ENCODE measurements at regions of chr2 and their contacts with region 1.

Region 1: GRCh38 chr2:134411828-134412638 is 158.2 kb downstream of the MGAT5 start:
- DNase-seq: peak; percentile 67
- H3K4me3 ChIP-seq: no peak overlapping the region
- H3K27ac ChIP-seq: no peak overlapping the region
- H3K4me1 ChIP-seq: peaks cover 38% of the 10 kb centered on the region
- H3K27me3 ChIP-seq: no peaks in the 10 kb centered on the region
- CTCF ChIP-seq: peak; percentile 77 to 84

Region 2: GRCh38 chr2:133652398-133652797 is 759.6 kb before region 1 on chr2:
- CTCF ChIA-PET with region 1: no interaction called
- dilution Hi-C with region 1: no loop called
- in situ Hi-C with region 1: no loop called
- intact Hi-C with region 1: no loop called
- DNase-seq: no peak
- H3K4me3 ChIP-seq: no peak overlapping the region
- H3K27ac ChIP-seq: no peak overlapping the region
- H3K4me1 ChIP-seq: peaks cover 6% of the 10 kb centered on the region
- H3K27me3 ChIP-seq: no peaks in the 10 kb centered on the region
- CTCF ChIP-seq: no peak

Region 3: GRCh38 chr2:133886735-133887660 is 525.0 kb before region 1 on chr2:
- CTCF ChIA-PET with region 1: interaction called, 7 read pairs
- dilution Hi-C with region 1: no loop called
- in situ Hi-C with region 1: loop called in 1 of 2 experiments (anchors 25 kb)
- intact Hi-C with region 1: loop called (anchors 1 kb)
- DNase-seq: peak; percentile 71
- H3K4me3 ChIP-seq: no peak overlapping the region
- H3K27ac ChIP-seq: no peak overlapping the region
- H3K4me1 ChIP-seq: peaks cover 16% of the 10 kb centered on the region
- H3K27me3 ChIP-seq: no peaks in the 10 kb centered on the region
- CTCF ChIP-seq: peak; percentile 61 to 73

Region 4: DNA sequence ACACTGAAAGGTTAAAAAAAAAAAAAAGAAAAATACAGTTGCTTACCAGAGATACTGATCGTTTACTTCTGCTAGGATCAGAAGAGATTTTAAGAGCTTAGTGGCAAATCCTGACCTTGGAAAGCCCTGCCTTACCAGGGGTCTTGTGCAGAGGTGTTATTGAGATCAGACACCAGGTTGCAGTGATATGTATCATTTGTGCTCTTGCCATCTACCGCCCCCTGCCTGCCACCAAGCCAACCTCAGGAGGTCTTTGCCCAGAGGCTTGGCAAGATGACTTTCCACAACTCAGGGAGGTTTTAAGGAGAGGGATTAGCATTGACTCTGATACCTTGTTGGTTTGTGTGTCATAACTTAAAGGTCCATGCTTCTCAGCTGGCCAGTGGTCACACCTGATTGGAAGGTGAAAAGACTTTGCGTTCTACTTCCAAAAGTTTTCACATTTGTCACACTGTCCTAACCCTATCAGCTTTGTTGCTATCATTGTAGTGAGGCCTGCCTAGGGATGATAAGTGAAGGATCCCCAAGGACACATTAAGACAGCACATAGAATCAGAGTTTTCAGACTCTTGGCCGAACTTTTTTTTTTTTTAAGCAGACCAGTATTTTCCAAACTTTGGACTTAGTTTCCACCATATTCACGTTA is 204.3 kb before region 1 on chr2:
- CTCF ChIA-PET with region 1: no interaction called
- dilution Hi-C with region 1: no loop called
- in situ Hi-C with region 1: no loop called
- intact Hi-C with region 1: loop called (anchors 5 kb)
- DNase-seq: peak; percentile 43
- H3K4me3 ChIP-seq: no peak overlapping the region
- H3K27ac ChIP-seq: no peak overlapping the region
- H3K4me1 ChIP-seq: peaks cover 10% of the 10 kb centered on the region
- H3K27me3 ChIP-seq: no peaks in the 10 kb centered on the region
- CTCF ChIP-seq: peak; percentile 89 to 90

Region 5: DNA sequence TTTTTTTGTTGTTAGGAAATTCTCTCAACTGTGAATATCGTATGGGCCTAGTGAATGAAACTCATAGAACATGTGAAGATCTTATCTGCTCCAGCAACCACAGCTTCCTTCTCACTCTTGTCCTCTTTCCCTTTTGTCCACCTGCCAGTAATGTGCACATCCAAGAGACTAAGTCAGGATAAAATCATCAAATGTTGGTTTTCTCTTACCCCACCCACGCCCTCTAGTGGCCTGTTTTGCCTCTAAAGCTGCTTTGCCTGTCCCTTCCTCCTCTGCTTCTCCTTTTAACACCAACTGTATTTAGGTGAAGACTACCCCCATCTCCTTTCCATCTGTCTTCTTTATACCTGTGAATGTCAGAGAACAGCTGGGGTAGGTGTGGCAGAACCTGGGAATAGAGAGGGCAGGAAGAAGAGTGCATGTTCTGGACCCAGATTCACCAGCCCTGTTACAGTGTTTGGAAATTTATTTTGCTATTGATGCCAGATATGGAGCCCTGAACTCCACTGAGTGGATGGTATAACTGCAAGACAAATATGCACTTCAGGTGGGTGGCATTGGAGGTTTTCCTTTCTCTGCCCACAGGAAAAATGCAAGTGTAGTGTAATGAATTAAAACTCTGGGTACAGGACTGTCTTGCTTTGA is 166.6 kb before region 1 on chr2:
- CTCF ChIA-PET with region 1: no interaction called
- dilution Hi-C with region 1: no loop called
- in situ Hi-C with region 1: loop called in 1 of 2 experiments (anchors 25 kb)
- intact Hi-C with region 1: loop called (anchors 1 kb)
- DNase-seq: peak; percentile 57
- H3K4me3 ChIP-seq: no peak overlapping the region
- H3K27ac ChIP-seq: no peak overlapping the region
- H3K4me1 ChIP-seq: peaks cover 5% of the 10 kb centered on the region
- H3K27me3 ChIP-seq: no peaks in the 10 kb centered on the region
- CTCF ChIP-seq: peak; percentile 78 to 89

Region 6: GRCh38 chr2:134375935-134376334 is 36.1 kb before region 1 on chr2:
- CTCF ChIA-PET with region 1: interaction called, 13 read pairs
- dilution Hi-C with region 1: no loop called
- in situ Hi-C with region 1: no loop called
- intact Hi-C with region 1: loop called (anchors 1 kb)
- DNase-seq: no peak
- H3K4me3 ChIP-seq: no peak overlapping the region
- H3K27ac ChIP-seq: no peak overlapping the region
- H3K4me1 ChIP-seq: peaks cover 39% of the 10 kb centered on the region
- H3K27me3 ChIP-seq: no peaks in the 10 kb centered on the region
- CTCF ChIP-seq: peak; percentile 41 to 65

Region 7: GRCh38 chr2:134451347-134451630 is 39.3 kb after region 1 on chr2:
- CTCF ChIA-PET with region 1: no interaction called
- dilution Hi-C with region 1: no loop called
- in situ Hi-C with region 1: no loop called
- intact Hi-C with region 1: loop called (anchors 2 kb)
- DNase-seq: no peak
- H3K4me3 ChIP-seq: no peak overlapping the region
- H3K27ac ChIP-seq: no peak overlapping the region
- H3K4me1 ChIP-seq: peaks cover 4% of the 10 kb centered on the region
- H3K27me3 ChIP-seq: no peaks in the 10 kb centered on the region
- CTCF ChIP-seq: no peak

Measured in mammary epithelial cell (primary cell).